Endothelial cell of umbilical vein (primary cell): ENCODE measurements at regions of chr9 and their contacts with region 1.

Region 1: DNA sequence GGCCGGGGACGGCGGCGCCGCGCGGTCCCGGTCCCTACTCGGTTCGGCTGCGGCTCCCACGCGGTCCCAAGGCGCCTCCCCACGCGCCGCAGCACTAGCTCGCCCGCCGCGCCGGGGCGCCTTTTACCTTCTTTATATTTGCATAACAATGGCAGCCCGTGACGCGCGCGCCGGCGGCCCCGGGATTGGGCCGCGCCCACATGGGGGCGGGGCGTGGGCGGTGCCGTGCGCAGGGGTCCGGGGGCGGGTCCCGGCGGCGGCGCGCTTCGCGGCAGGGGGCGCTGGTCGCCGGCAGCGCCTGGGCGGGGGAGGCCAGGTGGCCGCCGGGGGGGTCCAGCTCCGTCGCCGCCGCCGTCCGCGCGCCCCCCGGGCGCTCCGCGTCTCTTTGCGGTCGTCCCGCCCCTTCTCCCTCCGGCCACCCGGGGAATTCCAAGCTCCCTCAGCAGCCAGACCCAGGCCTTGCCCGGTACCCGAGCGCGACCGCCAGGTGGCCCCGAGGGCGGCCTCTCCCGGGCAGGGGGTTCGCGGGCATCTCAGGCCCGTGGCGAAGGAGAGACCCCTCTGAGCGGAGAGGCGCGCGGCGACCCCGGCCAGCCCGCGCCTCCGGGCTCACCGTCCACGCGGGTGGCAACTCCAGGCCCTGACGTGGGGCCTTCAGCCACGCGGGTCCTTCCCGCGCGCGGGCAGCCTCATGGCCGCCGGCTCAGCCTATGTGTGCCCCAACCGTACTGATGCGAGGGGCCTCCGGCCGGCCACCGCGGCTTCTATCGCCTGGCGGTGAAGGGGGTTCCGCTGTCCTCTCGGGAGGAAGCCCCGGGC is at the start of gene NRARP:
- DNase-seq: peak; percentile 82
- H3K4me3 ChIP-seq: peak within 1 kb of the TSS; percentile 61 to 83 (median 70)
- H3K27ac ChIP-seq: peak within 1 kb of the TSS; percentile 93
- H3K4me1 ChIP-seq: peaks cover 64% of the 10 kb centered on the region
- H3K27me3 ChIP-seq: no peaks in the 10 kb centered on the region
- CTCF ChIP-seq: peak; percentile 55 to 76
- POLR2A ChIP-seq: peak; percentile 97
- total RNA-seq, gene NRARP: 50.0 and 61.0 TPM in 2 replicates

Region 2: GRCh38 chr9:137217276-137218211 is 84.8 kb before region 1 on chr9:
- CTCF ChIA-PET with region 1: no interaction called
- POLR2A ChIA-PET with region 1: no interaction called
- dilution Hi-C with region 1: no loop called
- intact Hi-C with region 1: no loop called
- DNase-seq: no peak
- H3K4me3 ChIP-seq: no peak overlapping the region
- H3K27ac ChIP-seq: no peak overlapping the region
- H3K4me1 ChIP-seq: peaks cover 7% of the 10 kb centered on the region
- H3K27me3 ChIP-seq: no peaks in the 10 kb centered on the region
- CTCF ChIP-seq: no peak
- POLR2A ChIP-seq: no peak

Region 3: DNA sequence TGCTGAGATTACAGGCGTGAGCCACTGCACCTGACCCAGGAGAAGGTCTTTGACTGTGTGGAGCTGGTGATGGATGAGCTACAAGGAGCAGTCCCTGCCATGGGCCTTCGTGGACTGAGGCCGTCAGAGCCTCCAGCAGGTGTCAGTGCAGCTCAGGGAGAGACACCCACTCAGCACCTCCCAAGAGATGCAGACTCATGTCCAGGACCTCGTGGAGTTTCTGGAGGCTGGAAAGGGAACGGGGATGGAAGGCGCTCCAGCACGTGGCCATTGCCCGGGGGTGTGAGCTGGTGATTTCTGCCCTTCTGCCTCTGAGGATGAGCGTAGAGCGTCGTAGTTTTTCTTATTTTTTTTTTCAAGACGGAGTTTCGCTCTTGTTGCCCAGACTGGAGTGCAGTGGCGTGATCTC is 15.4 kb before region 1 on chr9:
- CTCF ChIA-PET with region 1: interaction called, 20 read pairs
- POLR2A ChIA-PET with region 1: interaction called, 5 read pairs
- dilution Hi-C with region 1: no loop called
- intact Hi-C with region 1: no loop called
- DNase-seq: peak; percentile 79
- H3K4me3 ChIP-seq: no peak overlapping the region
- H3K27ac ChIP-seq: no peak overlapping the region
- H3K4me1 ChIP-seq: peaks cover 4% of the 10 kb centered on the region
- H3K27me3 ChIP-seq: no peaks in the 10 kb centered on the region
- CTCF ChIP-seq: peak; percentile 65 to 86
- POLR2A ChIP-seq: no peak

Region 4: GRCh38 chr9:137339045-137339907 is 36.9 kb after region 1 on chr9:
- CTCF ChIA-PET with region 1: interaction called, 3 read pairs
- POLR2A ChIA-PET with region 1: no interaction called
- dilution Hi-C with region 1: no loop called
- intact Hi-C with region 1: loop called (anchors 2 kb)
- DNase-seq: peak; percentile 81
- H3K4me3 ChIP-seq: peak overlapping the region in 1 of 3 experiments; percentile 56
- H3K27ac ChIP-seq: peak overlapping the region; percentile 94
- H3K4me1 ChIP-seq: peaks cover 26% of the 10 kb centered on the region
- H3K27me3 ChIP-seq: no peaks in the 10 kb centered on the region
- CTCF ChIP-seq: no peak
- POLR2A ChIP-seq: no peak

Region 5: GRCh38 chr9:137370865-137371520 is 68.6 kb after region 1 on chr9:
- CTCF ChIA-PET with region 1: interaction called, 10 read pairs
- POLR2A ChIA-PET with region 1: no interaction called
- dilution Hi-C with region 1: no loop called
- intact Hi-C with region 1: no loop called
- DNase-seq: no peak
- H3K4me3 ChIP-seq: no peak overlapping the region
- H3K27ac ChIP-seq: no peak overlapping the region
- H3K4me1 ChIP-seq: no peaks in the 10 kb centered on the region
- H3K27me3 ChIP-seq: no peaks in the 10 kb centered on the region
- CTCF ChIP-seq: no peak
- POLR2A ChIP-seq: no peak

Region 6: DNA sequence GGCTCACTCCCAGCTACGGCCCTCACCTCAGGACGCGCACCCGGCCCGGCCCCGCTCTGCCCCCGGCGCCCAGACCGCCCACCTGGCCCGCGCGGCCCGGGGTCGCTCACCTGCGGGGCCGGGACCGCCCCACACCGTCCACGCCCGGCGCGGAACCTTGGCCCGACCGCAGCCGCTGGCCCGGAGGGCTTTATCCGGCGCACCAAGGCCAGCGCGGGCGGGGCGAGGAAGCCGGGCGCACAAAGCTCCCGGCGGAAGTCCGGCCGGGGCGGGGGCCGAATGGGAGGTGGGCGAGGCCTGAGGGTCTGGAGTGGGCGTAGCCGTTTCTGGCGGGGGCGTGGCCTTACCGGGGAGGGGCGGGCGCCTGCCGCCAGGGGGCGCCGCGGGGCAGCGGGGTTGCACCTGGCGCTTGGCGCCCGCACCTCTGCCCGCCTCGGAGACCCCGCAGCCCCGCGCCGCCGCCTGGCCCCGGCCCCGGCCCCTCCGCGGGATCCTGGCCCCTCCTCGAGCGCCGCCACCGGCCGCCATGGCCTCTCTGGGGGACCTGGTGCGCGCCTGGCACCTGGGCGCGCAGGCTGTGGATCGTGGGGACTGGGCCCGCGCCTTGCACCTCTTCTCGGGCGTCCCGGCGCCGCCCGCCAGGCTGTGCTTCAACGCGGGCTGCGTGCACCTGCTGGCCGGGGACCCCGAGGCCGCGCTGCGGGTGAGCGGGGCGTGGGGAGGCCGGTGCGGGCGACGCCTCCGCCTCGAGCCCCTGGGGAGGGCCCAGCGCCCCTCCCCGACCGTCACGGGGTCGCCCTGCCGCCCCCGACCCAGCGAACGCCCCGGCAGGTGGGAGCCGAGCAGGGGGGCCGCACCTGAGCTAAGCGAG is 120.9 kb after region 1 on chr9 and contains the starts of genes EXD3 and NOXA1:
- CTCF ChIA-PET with region 1: interaction called, 24 read pairs
- POLR2A ChIA-PET with region 1: interaction called, 5 read pairs
- dilution Hi-C with region 1: no loop called
- intact Hi-C with region 1: no loop called
- DNase-seq: peak; percentile 80
- H3K4me3 ChIP-seq: peak within 1 kb of the TSS; percentile 61 to 93 (median 92)
- H3K27ac ChIP-seq: peak within 1 kb of the TSS; percentile 46
- H3K4me1 ChIP-seq: peaks cover 14% of the 10 kb centered on the region
- H3K27me3 ChIP-seq: no peaks in the 10 kb centered on the region
- CTCF ChIP-seq: peak; percentile 77
- POLR2A ChIP-seq: no peak
- total RNA-seq, gene EXD3: 26.6 and 30.3 TPM in 2 replicates
- total RNA-seq, gene NOXA1: 0.91 and 1.3 TPM in 2 replicates